IMR-90 (cell line): ENCODE measurements at regions of chr14 and their contacts with region 1.

Region 1: DNA sequence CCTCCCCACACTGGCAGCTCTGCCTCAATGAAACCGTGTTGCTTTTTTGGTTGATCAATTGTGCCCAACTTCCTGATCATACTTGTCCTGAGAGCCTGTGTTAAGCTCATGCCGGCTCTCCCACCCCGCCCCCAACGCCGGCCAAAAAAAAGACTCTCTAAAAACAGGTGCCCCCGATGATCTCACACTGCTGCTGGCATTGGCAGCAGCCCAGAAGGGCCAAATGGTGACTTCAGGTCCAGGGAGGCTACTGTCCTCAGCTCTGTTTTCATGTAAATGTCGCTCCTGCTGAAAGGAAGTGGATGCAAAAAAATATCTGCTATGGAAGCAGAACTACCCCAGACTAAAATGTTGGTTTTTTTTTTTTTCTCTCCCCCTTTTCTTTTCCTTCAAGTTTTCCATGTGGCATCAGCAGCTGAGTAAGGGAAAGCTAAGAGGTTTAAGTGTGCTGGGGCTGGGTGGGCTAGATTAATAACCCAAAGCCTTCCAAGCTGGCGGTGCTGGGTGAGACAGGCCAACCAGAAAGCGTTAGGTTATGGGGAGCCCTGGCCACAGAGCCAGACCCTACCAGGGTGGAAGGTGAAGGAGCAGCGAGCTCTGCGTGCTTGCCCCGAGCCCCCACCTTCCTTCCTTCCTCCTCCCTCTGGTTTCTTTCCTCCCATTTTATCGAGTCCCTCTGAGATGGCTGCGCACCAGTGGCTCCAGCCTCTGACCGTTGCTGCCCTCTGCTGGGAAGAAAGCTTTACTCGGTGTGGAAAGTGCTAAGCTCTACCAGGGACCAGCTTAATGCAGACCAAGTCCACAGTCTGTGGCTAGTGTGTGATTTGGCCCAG is 396.1 kb downstream of the NRXN3 start:
- DNase-seq: peak; percentile 46
- ATAC-seq: peak; percentile 99
- H3K4me3 ChIP-seq: no peak overlapping the region
- H3K27ac ChIP-seq: no peak overlapping the region
- H3K4me1 ChIP-seq: no peaks in the 10 kb centered on the region
- H3K27me3 ChIP-seq: no peaks in the 10 kb centered on the region
- CTCF ChIP-seq: peak; percentile 67
- POLR2A ChIP-seq: no peak
- RAD21 ChIP-seq: peak; percentile 68

Region 2: GRCh38 chr14:77660754-77661153 is 905.5 kb before region 1 on chr14:
- CTCF ChIA-PET with region 1: no interaction called
- POLR2A ChIA-PET with region 1: no interaction called
- dilution Hi-C with region 1: no loop called
- in situ Hi-C with region 1: no loop called
- intact Hi-C with region 1: loop called (anchors 5 kb)
- DNase-seq: no peak
- ATAC-seq: no peak
- H3K4me3 ChIP-seq: no peak overlapping the region
- H3K27ac ChIP-seq: no peak overlapping the region
- H3K4me1 ChIP-seq: peaks cover 8% of the 10 kb centered on the region
- H3K27me3 ChIP-seq: no peaks in the 10 kb centered on the region
- CTCF ChIP-seq: no peak
- POLR2A ChIP-seq: no peak
- RAD21 ChIP-seq: no peak

Region 3: GRCh38 chr14:78048120-78048519 is 518.1 kb before region 1 on chr14:
- CTCF ChIA-PET with region 1: no interaction called
- POLR2A ChIA-PET with region 1: no interaction called
- dilution Hi-C with region 1: no loop called
- in situ Hi-C with region 1: no loop called
- intact Hi-C with region 1: no loop called
- DNase-seq: no peak
- ATAC-seq: no peak
- H3K4me3 ChIP-seq: no peak overlapping the region
- H3K27ac ChIP-seq: no peak overlapping the region
- H3K4me1 ChIP-seq: no peaks in the 10 kb centered on the region
- H3K27me3 ChIP-seq: no peaks in the 10 kb centered on the region
- CTCF ChIP-seq: no peak
- POLR2A ChIP-seq: no peak
- RAD21 ChIP-seq: no peak

Region 4: DNA sequence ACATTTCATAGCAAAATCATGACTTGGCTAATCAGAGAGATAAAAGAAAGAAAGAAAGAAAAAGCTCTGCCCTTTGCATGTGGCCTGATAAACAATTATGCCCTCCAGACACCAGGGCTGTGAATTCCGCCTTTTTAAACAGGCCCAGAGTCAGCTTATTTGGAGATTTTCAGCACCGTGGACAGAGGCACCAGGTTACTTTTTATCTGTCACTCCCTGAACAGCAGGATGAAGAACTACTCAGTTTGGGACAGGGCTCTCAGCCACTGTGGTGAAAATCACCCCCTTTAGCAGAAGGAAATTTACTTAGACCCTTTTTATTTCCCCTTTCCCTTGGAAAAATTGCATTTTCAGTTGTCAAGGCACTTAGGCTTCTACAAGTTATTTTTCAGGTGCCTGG is 36.2 kb before region 1 on chr14:
- CTCF ChIA-PET with region 1: no interaction called
- POLR2A ChIA-PET with region 1: no interaction called
- dilution Hi-C with region 1: no loop called
- in situ Hi-C with region 1: no loop called
- intact Hi-C with region 1: no loop called
- DNase-seq: no peak
- ATAC-seq: no peak
- H3K4me3 ChIP-seq: no peak overlapping the region
- H3K27ac ChIP-seq: no peak overlapping the region
- H3K4me1 ChIP-seq: no peaks in the 10 kb centered on the region
- H3K27me3 ChIP-seq: no peaks in the 10 kb centered on the region
- CTCF ChIP-seq: no peak
- POLR2A ChIP-seq: no peak
- RAD21 ChIP-seq: no peak